MCF 10A (cell line): ENCODE measurements at regions of chr10 and their contacts with region 1.

Region 1: GRCh38 chr10:17787078-17787961 is 21.8 kb upstream of the MRC1 start:
- DNase-seq: peak; percentile 90
- H3K4me3 Mint-ChIP-seq: peak overlapping the region; percentile 26
- H3K27ac Mint-ChIP-seq: no peak overlapping the region
- H3K4me1 Mint-ChIP-seq: peaks cover 31% of the 10 kb centered on the region
- H3K27me3 Mint-ChIP-seq: no peaks in the 10 kb centered on the region
- CTCF ChIP-seq: no peak

Region 2: GRCh38 chr10:17836942-17837341 is 49.6 kb after region 1 on chr10:
- CTCF ChIA-PET with region 1: no interaction called
- POLR2A ChIA-PET with region 1: interaction called, 3 read pairs
- intact Hi-C with region 1: loop called (anchors 5 kb)
- DNase-seq: peak; percentile 22
- H3K4me3 Mint-ChIP-seq: no peak overlapping the region
- H3K27ac Mint-ChIP-seq: no peak overlapping the region
- H3K4me1 Mint-ChIP-seq: peaks cover 25% of the 10 kb centered on the region
- H3K27me3 Mint-ChIP-seq: no peaks in the 10 kb centered on the region
- CTCF ChIP-seq: no peak

Region 3: DNA sequence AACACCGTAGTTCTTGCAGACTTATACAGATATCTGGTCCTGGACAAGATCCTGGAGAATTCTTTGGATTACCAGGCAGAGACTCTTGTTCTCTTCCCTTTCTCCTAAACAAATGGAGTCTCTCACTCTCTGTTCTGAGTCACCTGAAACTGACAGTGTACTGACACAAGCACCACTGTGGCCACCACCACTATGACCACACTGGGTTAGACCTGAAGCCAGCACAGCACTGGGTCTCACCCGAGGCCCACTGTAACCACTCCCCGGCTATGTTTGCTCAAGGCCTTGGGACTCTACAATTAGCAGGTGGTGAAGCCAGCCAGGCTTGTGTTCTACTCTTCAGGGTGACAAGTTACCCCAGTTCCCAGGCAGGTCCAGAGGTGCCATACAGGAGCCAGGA is 187.2 kb after region 1 on chr10:
- CTCF ChIA-PET with region 1: no interaction called
- POLR2A ChIA-PET with region 1: no interaction called
- intact Hi-C with region 1: no loop called
- DNase-seq: no peak
- H3K4me3 Mint-ChIP-seq: no peak overlapping the region
- H3K27ac Mint-ChIP-seq: no peak overlapping the region
- H3K4me1 Mint-ChIP-seq: peaks cover 6% of the 10 kb centered on the region
- H3K27me3 Mint-ChIP-seq: no peaks in the 10 kb centered on the region
- CTCF ChIP-seq: no peak